Panc1 (cell line): ENCODE measurements at regions of chr3 and their contacts with region 1.

Region 1: DNA sequence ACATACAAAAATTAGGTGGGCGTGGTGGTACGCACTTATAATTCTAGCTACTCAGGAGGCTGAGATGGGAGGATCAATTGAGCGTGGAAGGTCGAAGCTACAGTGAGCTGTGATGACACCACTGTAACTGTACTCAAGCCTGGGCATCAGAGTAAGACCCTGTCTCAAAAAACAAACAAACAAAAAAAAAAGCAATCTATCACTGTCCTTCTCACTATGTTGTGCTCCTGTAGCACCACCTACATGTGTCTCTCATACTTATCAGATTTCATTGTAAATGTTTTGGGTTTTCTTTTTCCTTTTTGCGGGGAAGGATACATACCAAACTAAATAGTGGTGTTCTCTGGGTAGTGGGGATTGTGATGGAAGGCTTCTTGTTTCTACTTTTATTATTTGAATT is 14.8 kb downstream of the FANCD2 start:
- DNase-seq: no peak
- ATAC-seq: no peak
- H3K4me3 ChIP-seq: no peak overlapping the region
- H3K27ac ChIP-seq: no peak overlapping the region
- H3K4me1 ChIP-seq: no peaks in the 10 kb centered on the region
- H3K27me3 ChIP-seq: no peaks in the 10 kb centered on the region
- CTCF ChIP-seq: no peak

Region 2: DNA sequence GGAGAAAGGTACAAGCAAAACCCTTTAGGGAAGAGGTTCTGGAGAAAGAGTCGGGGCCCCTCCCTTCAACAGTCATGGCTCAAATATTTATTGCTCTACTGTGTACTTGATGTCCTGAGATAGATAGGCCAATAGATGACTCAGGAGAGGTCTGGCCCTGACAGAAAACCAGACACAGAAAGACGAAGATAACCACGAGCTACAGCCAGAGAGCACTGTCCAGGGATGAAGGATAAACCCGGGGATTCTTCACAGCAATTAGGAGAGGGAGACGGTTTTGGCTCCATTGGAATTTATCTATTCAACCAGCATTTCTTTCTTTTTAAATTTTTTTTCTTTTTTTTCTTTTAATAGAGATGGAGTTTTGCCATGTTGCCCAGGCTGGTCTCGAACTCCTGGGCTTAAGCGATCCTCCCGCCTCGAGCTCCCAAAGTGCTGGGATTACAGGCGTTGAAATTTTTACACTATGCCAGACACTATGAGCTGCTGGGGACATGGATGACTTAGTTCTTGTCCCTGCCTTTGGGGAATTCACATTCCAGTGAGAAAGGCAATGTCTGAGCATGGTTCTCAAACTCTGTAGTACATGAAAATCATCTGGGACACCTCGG is 156.4 kb before region 1 on chr3:
- CTCF ChIA-PET with region 1: no interaction called
- POLR2A ChIA-PET with region 1: interaction called, 11 read pairs
- in situ Hi-C with region 1: no loop called
- intact Hi-C with region 1: no loop called
- DNase-seq: peak; percentile 41
- ATAC-seq: peak; percentile 94
- H3K4me3 ChIP-seq: no peak overlapping the region
- H3K27ac ChIP-seq: no peak overlapping the region
- H3K4me1 ChIP-seq: peaks cover 12% of the 10 kb centered on the region
- H3K27me3 ChIP-seq: no peaks in the 10 kb centered on the region
- CTCF ChIP-seq: no peak